ENCODE measurements at regions of chr19 and their contacts with region 1.

Region 1: GRCh38 chr19:18152444-18152816 is 533 bp upstream of the PIK3R2 start:
- DNase-seq: peak; percentile 96
- ATAC-seq: peak; percentile 55
- H3K4me3 ChIP-seq: peak overlapping the region; percentile 53
- H3K27ac ChIP-seq: peak overlapping the region; percentile 88
- H3K4me1 ChIP-seq: peaks cover 18% of the 10 kb centered on the region
- H3K27me3 ChIP-seq: no peaks in the 10 kb centered on the region
- CTCF ChIP-seq: peak; percentile 68
- POLR2A ChIP-seq: no peak
- RAD21 ChIP-seq: peak; percentile 43

Region 2: GRCh38 chr19:18007044-18007916 is 145.2 kb before region 1 on chr19:
- CTCF ChIA-PET with region 1: no interaction called
- POLR2A ChIA-PET with region 1: no interaction called
- dilution Hi-C with region 1: no loop called
- in situ Hi-C with region 1: no loop called
- intact Hi-C with region 1: loop called (anchors 10 kb)
- DNase-seq: peak; percentile 62
- ATAC-seq: peak; percentile 84
- H3K4me3 ChIP-seq: peak overlapping the region; percentile 41
- H3K27ac ChIP-seq: no peak overlapping the region
- H3K4me1 ChIP-seq: peaks cover 8% of the 10 kb centered on the region
- H3K27me3 ChIP-seq: no peaks in the 10 kb centered on the region
- CTCF ChIP-seq: peak; percentile 99
- POLR2A ChIP-seq: peak; percentile 54; the same call in 1 of the 2 replicates
- RAD21 ChIP-seq: peak; percentile 99

Region 3: GRCh38 chr19:18224525-18225354 is 72.3 kb after region 1 on chr19:
- CTCF ChIA-PET with region 1: interaction called, 3 read pairs
- POLR2A ChIA-PET with region 1: interaction called, 12 read pairs
- dilution Hi-C with region 1: no loop called
- in situ Hi-C with region 1: no loop called
- intact Hi-C with region 1: no loop called
- DNase-seq: peak; percentile 99
- ATAC-seq: peak; percentile 99
- H3K4me3 ChIP-seq: peak overlapping the region; percentile 52
- H3K27ac ChIP-seq: peak overlapping the region; percentile 8; the same call in 1 of the 2 replicates
- H3K4me1 ChIP-seq: peaks cover 7% of the 10 kb centered on the region
- H3K27me3 ChIP-seq: peaks cover 4% of the 10 kb centered on the region; the same call in 1 of the 2 replicates
- CTCF ChIP-seq: no peak
- POLR2A ChIP-seq: no peak
- RAD21 ChIP-seq: no peak

Region 4: GRCh38 chr19:18373892-18374629 is 221.6 kb after region 1 on chr19:
- CTCF ChIA-PET with region 1: no interaction called
- POLR2A ChIA-PET with region 1: no interaction called
- dilution Hi-C with region 1: no loop called
- in situ Hi-C with region 1: no loop called
- intact Hi-C with region 1: no loop called
- DNase-seq: peak; percentile 99
- ATAC-seq: peak; percentile 94
- H3K4me3 ChIP-seq: no peak overlapping the region
- H3K27ac ChIP-seq: peak overlapping the region; percentile 95
- H3K4me1 ChIP-seq: peaks cover 16% of the 10 kb centered on the region
- H3K27me3 ChIP-seq: no peaks in the 10 kb centered on the region
- CTCF ChIP-seq: no peak
- POLR2A ChIP-seq: peak; percentile 64
- RAD21 ChIP-seq: no peak